ENCODE measurements at regions of chr15 and their contacts with region 1.

Region 1: GRCh38 chr15:82985688-82986441 is at the start of gene RAMAC:
- DNase-seq: peak; percentile 79
- ATAC-seq: peak; percentile 95
- H3K4me3 Mint-ChIP-seq: peak within 1 kb of the TSS; percentile 99
- H3K27ac Mint-ChIP-seq: peak within 1 kb of the TSS; percentile 92
- H3K4me1 Mint-ChIP-seq: peaks cover 23% of the 10 kb centered on the region
- H3K27me3 Mint-ChIP-seq: no peaks in the 10 kb centered on the region
- CTCF ChIP-seq: no peak
- total RNA-seq, gene RAMAC: 23.4 and 24.7 TPM in 2 replicates

Region 2: DNA sequence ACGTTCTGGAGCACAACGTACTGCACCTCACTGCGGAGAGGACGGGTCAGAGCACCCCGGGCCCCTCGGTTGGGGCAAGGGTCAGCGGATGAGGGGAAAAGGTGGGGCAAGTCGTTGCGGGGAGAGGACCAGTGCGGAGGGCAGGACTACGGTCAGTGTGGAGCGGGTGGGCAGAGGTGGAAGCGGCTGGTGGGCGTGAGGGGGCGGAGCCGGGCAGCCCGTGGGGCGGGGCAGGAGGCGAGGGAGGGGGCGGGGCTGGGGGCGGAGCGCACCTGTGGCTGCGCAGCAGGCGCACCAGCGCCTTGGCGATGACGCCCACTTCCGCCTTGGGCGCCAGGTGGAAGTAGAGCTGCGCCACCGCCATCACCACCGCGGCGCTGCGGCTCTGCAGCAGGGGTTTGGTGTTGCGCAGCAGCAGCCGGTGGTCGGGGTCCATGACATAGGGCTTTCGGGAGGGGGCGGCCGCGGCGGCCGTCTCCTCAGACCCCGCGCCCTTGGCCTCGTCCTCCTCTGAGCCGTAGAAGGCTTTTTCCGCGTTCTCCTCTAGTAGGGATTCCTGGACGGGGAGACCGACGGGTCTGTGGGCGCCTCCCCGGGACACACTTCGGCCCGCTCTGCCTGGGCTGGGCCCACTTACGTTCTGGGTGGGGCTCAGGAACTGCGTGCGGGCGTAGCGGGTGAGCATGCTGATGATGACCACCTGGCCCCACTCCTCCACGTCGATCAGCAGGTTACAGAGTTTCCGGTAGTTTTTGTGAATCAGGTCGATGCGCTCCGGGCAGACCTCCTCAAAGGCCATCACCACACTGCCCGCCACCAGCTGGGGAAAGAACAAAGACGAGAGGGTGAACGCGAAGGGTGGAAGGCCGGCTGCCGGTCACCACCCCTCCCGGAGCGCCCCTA is 305.4 kb before region 1 on chr15:
- CTCF ChIA-PET with region 1: no interaction called
- POLR2A ChIA-PET with region 1: interaction called, 4 read pairs
- intact Hi-C with region 1: loop called (anchors 1 kb)
- DNase-seq: peak; percentile 59
- ATAC-seq: peak; percentile 93
- H3K4me3 Mint-ChIP-seq: peak overlapping the region; percentile 87
- H3K27ac Mint-ChIP-seq: peak overlapping the region; percentile 82
- H3K4me1 Mint-ChIP-seq: peaks cover 12% of the 10 kb centered on the region
- H3K27me3 Mint-ChIP-seq: peaks cover 11% of the 10 kb centered on the region
- CTCF ChIP-seq: no peak

Region 3: GRCh38 chr15:82809404-82810060 is 176.3 kb before region 1 on chr15 and contains the start of gene WHAMM:
- CTCF ChIA-PET with region 1: no interaction called
- POLR2A ChIA-PET with region 1: interaction called, 21 read pairs
- intact Hi-C with region 1: loop called (anchors 1 kb)
- DNase-seq: peak; percentile 91
- ATAC-seq: peak; percentile 87
- H3K4me3 Mint-ChIP-seq: peak within 1 kb of the TSS; percentile 91
- H3K27ac Mint-ChIP-seq: peak within 1 kb of the TSS; percentile 93
- H3K4me1 Mint-ChIP-seq: peaks cover 71% of the 10 kb centered on the region
- H3K27me3 Mint-ChIP-seq: no peaks in the 10 kb centered on the region
- CTCF ChIP-seq: no peak
- total RNA-seq, gene WHAMM: 17.7 and 18.7 TPM in 2 replicates

Region 4: GRCh38 chr15:82849556-82850512 is 136.0 kb before region 1 on chr15:
- CTCF ChIA-PET with region 1: interaction called, 7 read pairs
- POLR2A ChIA-PET with region 1: interaction called, 12 read pairs
- intact Hi-C with region 1: loop called (anchors 1 kb)
- DNase-seq: no peak
- ATAC-seq: peak; percentile 28
- H3K4me3 Mint-ChIP-seq: peak overlapping the region; percentile 28
- H3K27ac Mint-ChIP-seq: no peak overlapping the region
- H3K4me1 Mint-ChIP-seq: peaks cover 25% of the 10 kb centered on the region
- H3K27me3 Mint-ChIP-seq: no peaks in the 10 kb centered on the region
- CTCF ChIP-seq: no peak

Region 5: GRCh38 chr15:83066734-83067637 is 81.1 kb after region 1 on chr15 and contains the start of gene BTBD1:
- CTCF ChIA-PET with region 1: no interaction called
- POLR2A ChIA-PET with region 1: interaction called, 11 read pairs
- intact Hi-C with region 1: no loop called
- DNase-seq: peak; percentile 86
- ATAC-seq: peak; percentile 92
- H3K4me3 Mint-ChIP-seq: peak within 1 kb of the TSS; percentile 87
- H3K27ac Mint-ChIP-seq: peak within 1 kb of the TSS; percentile 73
- H3K4me1 Mint-ChIP-seq: peaks cover 9% of the 10 kb centered on the region
- H3K27me3 Mint-ChIP-seq: no peaks in the 10 kb centered on the region
- CTCF ChIP-seq: no peak
- total RNA-seq, gene BTBD1: 47.9 and 54.2 TPM in 2 replicates

Measured in activated B cell treated with CpG ODN at 0.5 μM for 24 hours (primary cell).